ENCODE measurements at regions of chr11 and their contacts with region 1.

Region 1: DNA sequence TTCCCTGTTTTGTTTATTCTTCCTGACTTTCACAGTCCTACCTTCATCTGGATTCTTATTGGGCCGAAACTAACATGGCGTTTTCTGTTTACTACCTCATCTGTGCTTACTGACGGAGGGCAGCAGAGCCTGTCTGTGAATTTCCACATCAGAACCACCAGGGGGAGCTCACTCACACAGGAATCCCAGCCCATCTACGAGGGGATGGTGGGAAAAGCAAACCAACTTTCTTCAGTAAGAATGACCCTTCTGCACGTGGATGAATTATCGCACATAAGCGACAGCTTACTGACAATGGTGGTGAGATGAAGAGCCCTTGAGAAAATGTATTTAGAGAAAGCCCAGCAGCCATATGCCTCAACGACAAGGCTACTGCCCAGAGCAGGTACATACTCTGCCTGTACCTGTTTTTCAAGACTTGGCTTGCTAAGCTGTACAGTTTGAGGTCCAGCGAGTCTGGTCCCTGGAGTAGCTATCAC is 42.5 kb downstream of the LARGE2 start:
- DNase-seq: peak; percentile 7 to 86 (median 54)
- ATAC-seq: peak; percentile 98
- H3K4me3 ChIP-seq: no peak overlapping the region
- H3K4me3 Mint-ChIP-seq: no peak overlapping the region
- H3K27ac ChIP-seq: peak overlapping the region in 1 of 2 experiments; percentile 12
- H3K27ac Mint-ChIP-seq: no peak overlapping the region
- H3K4me1 ChIP-seq: no peaks in the 10 kb centered on the region
- H3K4me1 Mint-ChIP-seq: no peaks in the 10 kb centered on the region
- H3K27me3 ChIP-seq: no peaks in the 10 kb centered on the region
- H3K27me3 Mint-ChIP-seq: no peaks in the 10 kb centered on the region
- CTCF ChIP-seq: peak; percentile 95

Region 2: GRCh38 chr11:44351006-44351660 is 1613.8 kb before region 1 on chr11:
- CTCF ChIA-PET with region 1: no interaction called
- POLR2A ChIA-PET with region 1: no interaction called
- intact Hi-C with region 1: no loop called
- DNase-seq: no peak
- ATAC-seq: no peak
- H3K4me3 ChIP-seq: no peak overlapping the region
- H3K4me3 Mint-ChIP-seq: no peak overlapping the region
- H3K27ac ChIP-seq: no peak overlapping the region
- H3K27ac Mint-ChIP-seq: no peak overlapping the region
- H3K4me1 ChIP-seq: no peaks in the 10 kb centered on the region
- H3K4me1 Mint-ChIP-seq: no peaks in the 10 kb centered on the region
- H3K27me3 ChIP-seq: no peaks in the 10 kb centered on the region
- H3K27me3 Mint-ChIP-seq: peaks cover 36% of the 10 kb centered on the region
- CTCF ChIP-seq: no peak

Region 3: DNA sequence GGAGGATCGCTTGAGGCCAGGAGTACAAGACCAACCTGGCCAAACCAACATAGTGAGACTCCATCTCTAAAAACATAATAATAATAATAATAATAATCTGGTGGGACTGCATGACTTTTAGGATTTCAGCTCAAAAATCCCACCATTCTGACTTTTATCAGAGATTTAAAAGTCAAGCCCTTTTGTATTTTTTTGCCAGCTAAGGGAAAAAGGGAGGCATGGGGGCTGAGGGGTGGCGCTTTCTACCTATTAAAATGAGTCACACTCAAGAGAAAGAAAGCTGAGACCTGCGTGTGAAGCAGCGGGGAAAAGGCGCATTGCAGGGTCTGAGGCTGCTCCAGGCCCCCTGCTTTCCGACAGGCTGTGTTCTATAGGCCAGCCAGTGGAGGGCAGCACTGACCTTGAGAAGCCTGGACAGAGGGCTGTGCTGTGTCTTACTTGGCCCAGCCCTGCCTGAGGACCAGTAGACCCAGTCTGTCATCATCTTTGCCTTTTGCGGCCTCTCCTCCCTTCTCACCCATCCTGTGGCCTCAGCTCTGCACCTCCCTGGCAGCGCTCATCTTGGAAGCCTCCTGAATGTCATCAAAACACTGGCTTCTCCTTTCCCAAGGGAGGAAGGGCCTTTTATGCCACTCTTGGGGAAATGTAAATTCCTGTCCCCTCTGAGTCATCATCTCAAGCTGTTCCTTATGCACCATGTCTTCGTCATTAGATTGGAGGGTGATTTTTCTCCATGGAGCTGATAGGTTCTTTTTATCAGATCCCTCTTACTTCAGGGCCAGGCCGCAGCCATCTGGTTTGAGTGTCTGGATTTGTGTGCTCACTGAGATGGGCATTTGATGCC is 92.2 kb before region 1 on chr11:
- CTCF ChIA-PET with region 1: interaction called, 10 read pairs
- POLR2A ChIA-PET with region 1: no interaction called
- intact Hi-C with region 1: no loop called
- DNase-seq: peak in 6 of 9 experiments; percentile 16 to 55 (median 45)
- ATAC-seq: peak; percentile 83
- H3K4me3 ChIP-seq: no peak overlapping the region
- H3K4me3 Mint-ChIP-seq: no peak overlapping the region
- H3K27ac ChIP-seq: no peak overlapping the region
- H3K27ac Mint-ChIP-seq: no peak overlapping the region
- H3K4me1 ChIP-seq: no peaks in the 10 kb centered on the region
- H3K4me1 Mint-ChIP-seq: no peaks in the 10 kb centered on the region
- H3K27me3 ChIP-seq: no peaks in the 10 kb centered on the region
- H3K27me3 Mint-ChIP-seq: no peaks in the 10 kb centered on the region
- CTCF ChIP-seq: peak; percentile 32

Region 4: DNA sequence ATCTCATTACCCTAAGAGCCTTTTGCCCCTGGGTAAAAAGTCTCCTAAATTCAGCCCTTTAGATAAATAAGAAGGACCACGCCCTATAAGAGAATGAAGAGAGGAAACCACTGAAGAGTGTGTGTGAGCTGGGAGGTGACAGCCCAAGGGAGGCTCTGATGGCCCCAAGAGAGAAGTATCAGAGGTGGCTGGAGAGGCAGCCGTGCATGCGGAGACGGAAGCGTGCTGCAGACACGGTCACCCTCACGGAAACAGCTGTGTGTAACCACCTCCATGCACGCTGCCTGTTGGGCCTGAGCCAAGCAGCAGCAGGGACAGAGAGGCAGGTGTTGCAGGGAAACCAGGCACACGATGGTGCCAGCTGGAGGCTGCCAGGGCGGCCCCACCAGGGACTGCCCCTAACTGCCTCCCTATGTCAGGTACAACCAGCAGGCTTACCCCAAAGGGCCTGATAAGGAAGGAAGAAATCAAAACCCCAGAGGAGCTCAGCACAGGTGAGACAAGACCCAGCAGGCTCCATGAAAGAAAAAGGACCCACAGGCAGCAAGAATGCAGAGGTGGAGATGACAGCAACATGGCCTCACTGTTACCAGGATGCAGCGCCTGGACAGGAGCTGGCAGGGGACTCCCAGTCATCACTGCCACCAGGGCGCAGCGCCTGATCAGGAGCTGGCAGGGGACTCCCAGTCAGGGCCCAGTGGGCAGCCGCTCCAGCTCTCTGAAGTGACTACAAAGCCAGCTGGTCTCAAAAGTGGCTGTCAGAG is 34.7 kb before region 1 on chr11:
- CTCF ChIA-PET with region 1: interaction called, 15 read pairs
- POLR2A ChIA-PET with region 1: no interaction called
- intact Hi-C with region 1: no loop called
- DNase-seq: peak in 7 of 9 experiments; percentile 15 to 74 (median 45)
- ATAC-seq: peak; percentile 80
- H3K4me3 ChIP-seq: peak overlapping the region; percentile 1 to 40
- H3K4me3 Mint-ChIP-seq: peak overlapping the region; percentile 58
- H3K27ac ChIP-seq: peak overlapping the region; percentile 50 to 75
- H3K27ac Mint-ChIP-seq: peak overlapping the region; percentile 91
- H3K4me1 ChIP-seq: peaks cover 31% of the 10 kb centered on the region
- H3K4me1 Mint-ChIP-seq: peaks cover 28% of the 10 kb centered on the region
- H3K27me3 ChIP-seq: no peaks in the 10 kb centered on the region
- H3K27me3 Mint-ChIP-seq: no peaks in the 10 kb centered on the region
- CTCF ChIP-seq: no peak

Region 5: DNA sequence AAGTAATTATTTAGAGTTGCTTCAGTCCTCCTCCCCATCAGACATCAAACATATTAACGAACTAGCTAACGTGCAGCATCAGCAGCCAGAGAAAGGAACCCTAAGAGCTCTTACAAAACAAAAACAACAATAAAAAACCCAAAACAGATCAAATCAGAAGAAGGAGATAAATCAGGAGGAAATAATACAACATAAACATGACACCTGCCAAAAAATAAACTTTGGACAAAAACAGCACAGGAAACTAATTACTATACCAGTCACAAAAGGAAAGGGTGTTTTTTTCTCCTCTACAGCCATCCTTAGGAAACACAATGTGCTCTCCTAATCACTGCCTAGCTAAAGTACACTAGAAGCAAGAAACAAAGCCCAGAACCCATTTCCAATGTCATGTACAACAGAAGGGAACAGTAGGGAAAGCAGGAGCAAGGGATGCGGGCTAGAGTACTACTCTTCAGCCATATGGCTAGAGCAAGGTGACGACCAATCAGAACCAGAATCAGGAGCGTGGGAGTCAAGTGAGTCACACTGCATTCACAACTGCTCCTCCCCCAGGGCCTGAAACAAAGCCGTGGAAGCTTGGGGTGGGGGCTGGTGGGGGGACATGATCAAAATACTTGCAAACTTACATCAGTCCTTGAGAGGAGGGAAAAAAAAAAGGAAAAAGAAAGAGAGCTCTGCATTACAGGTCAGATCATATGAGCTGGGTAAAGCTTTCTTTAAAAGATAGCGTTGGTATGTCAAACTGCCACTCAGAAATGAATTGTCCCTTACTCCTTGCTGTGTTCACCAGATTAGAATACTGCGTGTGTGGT is 17.9 kb after region 1 on chr11:
- CTCF ChIA-PET with region 1: interaction called, 24 read pairs
- POLR2A ChIA-PET with region 1: no interaction called
- intact Hi-C with region 1: no loop called
- DNase-seq: no peak
- ATAC-seq: no peak
- H3K4me3 ChIP-seq: no peak overlapping the region
- H3K4me3 Mint-ChIP-seq: no peak overlapping the region
- H3K27ac ChIP-seq: no peak overlapping the region
- H3K27ac Mint-ChIP-seq: no peak overlapping the region
- H3K4me1 ChIP-seq: no peaks in the 10 kb centered on the region
- H3K4me1 Mint-ChIP-seq: peaks cover 21% of the 10 kb centered on the region
- H3K27me3 ChIP-seq: no peaks in the 10 kb centered on the region
- H3K27me3 Mint-ChIP-seq: no peaks in the 10 kb centered on the region
- CTCF ChIP-seq: no peak

Region 6: DNA sequence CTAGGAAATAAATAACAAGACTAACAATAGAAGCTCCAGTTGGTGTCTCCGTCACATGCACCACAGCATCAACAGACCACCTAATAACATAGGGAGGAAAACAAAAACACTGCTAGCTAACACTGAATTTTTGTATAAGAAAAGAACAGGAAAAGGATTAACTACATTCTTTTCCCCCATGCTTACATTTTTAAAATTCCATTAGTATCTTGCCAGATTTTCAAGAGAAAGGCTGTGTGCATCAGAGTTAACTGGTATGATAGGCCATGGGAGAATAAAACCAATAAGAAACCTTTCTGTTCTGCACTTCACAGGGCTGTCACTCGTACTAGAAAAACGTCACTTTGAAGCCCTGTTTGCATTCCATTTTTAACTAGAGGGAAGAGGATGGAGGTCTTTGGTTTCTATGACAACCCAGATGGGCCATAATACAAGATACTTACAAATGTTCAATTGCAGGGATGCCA is 36.5 kb after region 1 on chr11:
- CTCF ChIA-PET with region 1: interaction called, 54 read pairs
- POLR2A ChIA-PET with region 1: interaction called, 4 read pairs
- intact Hi-C with region 1: loop called (anchors 1 kb)
- DNase-seq: no peak
- ATAC-seq: no peak
- H3K4me3 ChIP-seq: no peak overlapping the region
- H3K4me3 Mint-ChIP-seq: no peak overlapping the region
- H3K27ac ChIP-seq: no peak overlapping the region
- H3K27ac Mint-ChIP-seq: no peak overlapping the region
- H3K4me1 ChIP-seq: no peaks in the 10 kb centered on the region
- H3K4me1 Mint-ChIP-seq: peaks cover 5% of the 10 kb centered on the region
- H3K27me3 ChIP-seq: no peaks in the 10 kb centered on the region
- H3K27me3 Mint-ChIP-seq: no peaks in the 10 kb centered on the region
- CTCF ChIP-seq: no peak

Region 7: DNA sequence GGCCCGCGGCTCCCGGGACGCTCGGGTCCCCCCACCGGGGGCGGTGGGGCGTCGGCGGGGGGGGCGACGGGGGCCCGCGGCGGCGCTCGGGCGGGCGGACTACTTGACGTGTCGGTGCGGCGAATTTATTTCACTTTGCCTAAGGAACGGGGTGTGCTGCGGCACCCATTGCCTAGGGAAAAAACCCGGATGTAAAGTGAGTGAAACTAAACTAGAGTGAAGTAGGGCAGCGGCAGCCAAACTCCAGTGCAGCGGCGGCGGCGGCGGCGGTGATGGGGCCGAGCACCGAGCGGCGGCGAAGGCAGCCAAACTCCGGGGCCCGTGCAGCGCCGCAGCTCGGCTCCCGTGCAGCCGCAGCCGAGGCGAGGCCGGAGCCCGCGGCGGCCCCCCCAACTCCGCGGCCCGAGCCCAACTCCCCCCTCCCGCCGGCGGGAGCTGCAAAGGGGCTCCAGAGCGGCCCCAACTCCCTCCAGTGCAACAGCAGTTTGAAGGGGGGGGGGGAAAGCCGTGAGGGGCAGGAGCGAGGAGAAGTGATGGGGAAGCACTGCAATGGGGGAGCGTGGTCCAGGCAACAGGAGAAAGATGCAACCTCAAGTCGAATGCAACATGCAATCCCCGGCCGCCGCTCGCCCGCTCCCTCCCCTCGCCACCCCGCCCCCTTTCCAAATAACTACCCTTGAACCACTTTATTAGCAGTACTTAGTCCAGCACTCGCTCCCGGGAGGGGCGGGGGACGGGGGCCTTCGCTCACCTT is 157.0 kb after region 1 on chr11:
- CTCF ChIA-PET with region 1: interaction called, 7 read pairs
- POLR2A ChIA-PET with region 1: no interaction called
- intact Hi-C with region 1: loop called in 1 of 2 experiments (anchors 10 kb)
- DNase-seq: peak; percentile 50 to 92 (median 73)
- ATAC-seq: peak; percentile 54
- H3K4me3 ChIP-seq: peak overlapping the region; percentile 58 to 63
- H3K4me3 Mint-ChIP-seq: peak overlapping the region; percentile 88
- H3K27ac ChIP-seq: peak overlapping the region; percentile 1 to 26
- H3K27ac Mint-ChIP-seq: peak overlapping the region; percentile 96
- H3K4me1 ChIP-seq: peaks cover 30% of the 10 kb centered on the region
- H3K4me1 Mint-ChIP-seq: peaks cover 33% of the 10 kb centered on the region
- H3K27me3 ChIP-seq: no peaks in the 10 kb centered on the region
- H3K27me3 Mint-ChIP-seq: no peaks in the 10 kb centered on the region
- CTCF ChIP-seq: no peak

Region 8: DNA sequence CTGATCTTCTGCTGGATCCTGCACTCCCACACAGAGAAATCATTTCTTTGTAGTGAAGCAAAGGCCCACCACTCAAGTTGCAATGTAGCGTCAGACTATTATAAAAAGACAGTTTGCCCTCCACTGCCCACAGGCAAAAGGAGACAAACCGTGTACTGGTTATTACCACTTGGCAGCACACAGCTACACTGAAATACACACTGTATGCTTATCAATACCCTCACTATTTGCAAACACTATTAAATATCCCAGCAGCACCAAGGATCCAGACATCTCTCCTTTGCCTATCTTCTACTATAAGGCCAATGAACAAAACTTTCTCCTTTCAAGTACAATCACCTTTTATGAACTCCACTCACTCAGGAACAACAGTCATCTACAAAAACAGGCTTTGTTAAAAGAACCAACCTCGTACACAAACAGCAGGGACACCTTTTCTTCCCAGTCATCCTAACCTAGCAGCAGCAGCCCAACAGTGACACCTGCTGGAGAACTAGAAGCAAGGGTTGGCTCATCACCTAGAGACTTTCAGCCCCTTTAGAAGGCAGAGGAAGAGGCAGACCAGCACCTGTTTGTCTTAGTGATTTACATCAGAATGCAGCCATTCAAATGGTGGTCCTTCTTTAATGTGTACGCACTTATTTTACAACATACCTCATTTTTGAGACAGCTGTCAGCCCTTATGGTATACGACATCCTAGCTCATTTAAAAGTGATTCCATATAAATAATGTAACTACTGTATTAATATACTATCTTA is 572.8 kb after region 1 on chr11:
- CTCF ChIA-PET with region 1: no interaction called
- POLR2A ChIA-PET with region 1: no interaction called
- intact Hi-C with region 1: loop called (anchors 10 kb)
- DNase-seq: peak; percentile 19 to 78 (median 57)
- ATAC-seq: peak; percentile 91
- H3K4me3 ChIP-seq: no peak overlapping the region
- H3K4me3 Mint-ChIP-seq: no peak overlapping the region
- H3K27ac ChIP-seq: no peak overlapping the region
- H3K27ac Mint-ChIP-seq: peak overlapping the region; percentile 47
- H3K4me1 ChIP-seq: peaks cover 7% of the 10 kb centered on the region
- H3K4me1 Mint-ChIP-seq: peaks cover 35% of the 10 kb centered on the region
- H3K27me3 ChIP-seq: no peaks in the 10 kb centered on the region
- H3K27me3 Mint-ChIP-seq: no peaks in the 10 kb centered on the region
- CTCF ChIP-seq: peak; percentile 93